Dorsolateral prefrontal cortex (tissue), 120 donors: ENCODE measurements at regions of chr12 and their contacts with region 1.

Region 1: DNA sequence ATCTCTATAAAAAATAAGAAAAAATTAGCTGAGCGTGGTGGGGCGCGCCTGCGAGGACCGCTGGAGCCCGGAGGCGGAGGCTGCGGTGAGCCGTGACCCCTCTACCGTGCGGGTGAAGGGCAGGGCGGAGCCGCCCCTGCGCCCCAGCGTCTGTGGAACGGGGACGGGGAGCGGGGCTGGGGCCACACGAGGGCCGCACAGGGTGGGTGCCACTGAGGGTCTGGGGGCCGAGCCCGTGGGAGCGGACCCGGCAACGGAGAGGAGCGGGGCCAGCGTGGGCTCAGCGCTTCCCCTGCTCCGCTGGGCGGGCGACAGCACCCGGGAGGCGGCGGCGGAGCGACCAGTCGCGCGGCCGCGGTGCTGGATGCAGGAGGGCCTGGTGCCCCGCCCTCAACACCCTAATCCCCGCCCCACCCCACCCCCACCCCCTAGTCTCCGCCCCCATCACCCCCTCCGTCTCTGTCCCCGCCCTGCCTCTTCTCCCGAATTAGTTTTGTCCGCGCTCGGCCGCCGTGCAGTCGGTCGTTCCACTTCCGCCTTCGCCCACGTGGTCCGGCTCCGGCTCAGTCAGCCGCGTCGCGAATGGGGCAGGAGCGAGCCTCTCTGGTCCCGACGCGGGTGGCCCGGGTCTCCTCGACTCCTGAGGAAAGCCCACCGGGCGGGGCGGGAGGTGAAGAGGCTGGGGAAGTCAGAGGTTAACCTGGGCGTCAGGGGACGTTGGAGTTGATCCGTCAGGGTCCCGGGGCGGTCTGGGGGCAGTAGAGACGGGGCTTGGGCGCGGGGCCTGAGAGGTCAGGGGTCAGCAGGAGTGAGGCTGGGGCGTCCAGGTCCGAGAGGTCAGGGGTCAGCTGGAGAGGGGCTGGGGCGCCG is at the start of gene PUS1:
- DNase-seq: peak; percentile 86 to 97 (median 94)
- H3K4me3 ChIP-seq: peak within 1 kb of the TSS; percentile 64 to 95 (median 85)
- H3K27ac ChIP-seq: peak within 1 kb of the TSS in 55 of 59 donors; percentile 20 to 92 (median 80)
- H3K27me3 ChIP-seq: no peaks in the 10 kb centered on the region
- CTCF ChIP-seq: peak in 28 of 56 donors; percentile 5 to 47 (median 20)
- total RNA-seq, gene PUS1: 14.3 to 37.0 (median 24.2) TPM

Region 2: DNA sequence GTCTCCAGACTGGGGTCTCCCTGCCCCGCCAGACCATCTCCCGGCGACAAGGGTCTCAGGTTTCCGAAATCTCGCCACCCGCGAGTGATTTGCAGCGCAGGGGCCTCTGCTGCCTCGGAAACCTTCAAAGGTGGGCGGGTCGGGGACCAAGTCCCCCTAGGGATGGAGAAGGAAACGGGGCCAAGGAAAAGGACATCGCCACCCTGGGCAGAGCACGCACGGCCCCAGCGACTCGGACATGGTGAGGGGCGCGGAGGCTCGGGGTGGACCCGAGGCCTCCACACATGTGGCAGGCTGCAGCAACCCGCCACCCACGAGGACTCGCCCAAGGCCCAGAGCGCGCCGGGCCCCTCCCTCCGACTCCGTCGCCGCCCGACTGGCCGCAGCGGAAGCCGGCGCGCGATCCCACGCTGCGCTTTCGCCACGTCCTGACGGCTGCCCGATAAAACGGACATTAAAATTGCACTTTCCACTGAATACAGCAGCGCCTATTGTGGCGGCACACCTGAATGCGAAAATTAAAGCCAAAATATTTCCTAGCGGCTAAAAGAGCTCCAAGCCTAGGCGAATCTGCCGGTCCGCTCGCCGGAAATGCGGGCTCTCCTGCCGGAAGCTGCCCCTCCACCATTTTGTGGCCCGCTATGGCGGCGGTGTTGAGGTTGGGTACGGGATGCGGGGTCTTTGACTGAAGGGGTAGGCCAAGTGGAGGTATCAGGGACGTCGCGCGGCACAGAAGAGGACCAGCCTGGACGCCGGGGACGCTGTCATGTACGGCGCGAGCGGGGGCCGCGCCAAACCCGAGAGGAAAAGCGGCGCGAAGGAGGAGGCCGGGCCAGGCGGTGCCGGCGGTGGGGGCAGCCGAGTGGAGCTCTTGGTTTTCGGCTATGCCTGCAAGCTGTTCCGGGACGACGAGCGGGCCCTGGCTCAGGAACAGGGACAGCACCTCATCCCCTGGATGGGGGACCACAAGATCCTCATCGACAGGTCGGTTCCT is 218.2 kb before region 1 on chr12 and contains the start of gene SFSWAP:
- intact Hi-C with region 1: no loop called
- DNase-seq: peak; percentile 58 to 85 (median 74)
- H3K4me3 ChIP-seq: peak within 1 kb of the TSS; percentile 74 to 100 (median 97)
- H3K27ac ChIP-seq: peak within 1 kb of the TSS; percentile 86 to 100 (median 98)
- H3K27me3 ChIP-seq: no peaks in the 10 kb centered on the region
- CTCF ChIP-seq: peak in 38 of 56 donors; percentile 4 to 58 (median 36)
- total RNA-seq, gene SFSWAP: 42.1 to 121 (median 68.6) TPM

Region 3: DNA sequence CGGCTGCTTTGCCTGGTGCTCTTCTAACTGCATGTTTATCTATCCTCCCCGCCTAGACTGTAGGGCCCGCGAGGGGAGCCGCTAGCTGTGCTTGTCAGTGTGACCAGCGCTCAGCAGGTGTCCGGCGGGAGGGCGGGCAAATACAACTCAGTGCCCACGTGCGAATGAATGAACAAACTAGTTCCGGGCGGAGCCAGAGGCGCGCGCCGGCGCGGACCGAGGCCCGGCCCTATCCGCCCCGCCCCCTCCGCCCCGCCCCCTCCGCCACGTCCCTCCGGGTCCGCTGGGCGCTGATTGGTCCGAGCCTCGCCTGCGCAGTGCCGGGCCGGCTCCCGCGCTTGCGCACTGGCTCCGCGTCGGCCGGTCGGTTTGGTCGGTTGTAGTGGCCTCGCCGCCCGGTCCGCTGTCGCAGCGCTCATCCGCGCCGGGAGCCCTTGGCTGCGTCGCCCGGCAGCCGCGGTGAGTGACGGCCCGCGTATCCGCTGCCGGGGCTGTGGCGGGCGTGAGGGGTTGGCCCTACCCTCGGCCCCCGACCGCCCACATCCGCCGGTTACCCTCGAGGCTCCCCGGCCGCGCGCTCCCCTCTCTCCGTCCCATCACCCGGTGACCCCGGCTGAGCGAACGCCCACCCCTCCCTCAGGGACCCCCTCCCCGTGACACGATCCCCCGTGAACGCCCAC is 155.1 kb after region 1 on chr12:
- intact Hi-C with region 1: loop called in 1 of 2 experiments (anchors 10 kb)
- DNase-seq: peak; percentile 85 to 96 (median 88)
- H3K4me3 ChIP-seq: peak overlapping the region; percentile 71 to 98 (median 90)
- H3K27ac ChIP-seq: peak overlapping the region in 49 of 59 donors; percentile 18 to 88 (median 72)
- H3K27me3 ChIP-seq: no peaks in the 10 kb centered on the region
- CTCF ChIP-seq: peak in 15 of 56 donors; percentile 9 to 46 (median 21)